ENCODE measurements at regions of chr12 and their contacts with region 1.

Region 1: GRCh38 chr12:121399391-121400331 is at the start of gene RNF34:
- DNase-seq: peak; percentile 99
- H3K4me3 Mint-ChIP-seq: peak within 1 kb of the TSS; percentile 94
- H3K27ac Mint-ChIP-seq: peak within 1 kb of the TSS; percentile 96
- H3K4me1 Mint-ChIP-seq: peaks cover 33% of the 10 kb centered on the region
- H3K27me3 Mint-ChIP-seq: no peaks in the 10 kb centered on the region
- total RNA-seq, gene RNF34: 70.4 to 72.5 TPM

Region 2: DNA sequence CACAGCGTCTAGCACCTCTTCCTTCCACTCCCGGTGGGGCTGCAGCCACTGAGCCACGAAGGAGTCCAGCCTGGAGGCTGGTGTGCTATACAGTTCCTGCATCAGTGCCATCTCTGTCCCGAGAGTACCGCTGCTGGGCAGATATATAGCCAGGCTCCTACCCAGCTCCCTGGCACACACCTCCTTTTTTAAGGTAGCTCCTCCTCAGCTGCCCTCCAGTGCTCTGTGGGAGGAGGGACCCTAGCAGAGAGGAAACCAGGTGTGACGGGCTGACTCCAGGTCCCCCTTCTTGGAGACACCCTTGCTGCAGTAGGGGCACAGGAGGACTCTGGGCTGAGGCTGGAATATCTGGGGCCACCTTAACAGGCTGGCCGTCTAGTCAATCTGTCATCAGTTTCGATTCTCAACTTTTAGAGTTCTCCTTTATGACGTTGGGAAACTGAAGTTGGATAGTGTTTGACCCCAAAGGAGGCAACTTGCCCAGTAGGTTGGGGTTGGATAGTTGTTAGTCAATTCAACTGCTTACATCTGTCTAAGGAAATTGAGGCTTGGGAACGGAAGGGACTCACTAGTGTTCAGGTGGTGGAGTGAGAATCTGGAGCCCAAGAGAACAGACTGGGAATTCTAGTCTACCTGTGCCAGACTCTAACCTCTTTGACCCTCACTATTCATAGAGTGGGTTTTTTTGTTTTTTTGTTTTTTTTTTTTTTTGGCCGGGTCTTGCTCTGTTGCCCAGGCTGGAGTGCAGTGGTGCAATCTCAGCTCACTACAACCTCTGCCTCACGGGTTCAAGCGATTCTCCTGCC is 360.6 kb before region 1 on chr12 and contains the start of gene OASL:
- CTCF ChIA-PET with region 1: no interaction called
- POLR2A ChIA-PET with region 1: no interaction called
- intact Hi-C with region 1: loop called (anchors 1 kb)
- DNase-seq: peak; percentile 75
- H3K4me3 Mint-ChIP-seq: peak within 1 kb of the TSS; percentile 85
- H3K27ac Mint-ChIP-seq: peak within 1 kb of the TSS; percentile 84
- H3K4me1 Mint-ChIP-seq: peaks cover 50% of the 10 kb centered on the region
- H3K27me3 Mint-ChIP-seq: peaks cover 9% of the 10 kb centered on the region
- total RNA-seq, gene OASL: 21.9 to 26.5 TPM

Region 3: DNA sequence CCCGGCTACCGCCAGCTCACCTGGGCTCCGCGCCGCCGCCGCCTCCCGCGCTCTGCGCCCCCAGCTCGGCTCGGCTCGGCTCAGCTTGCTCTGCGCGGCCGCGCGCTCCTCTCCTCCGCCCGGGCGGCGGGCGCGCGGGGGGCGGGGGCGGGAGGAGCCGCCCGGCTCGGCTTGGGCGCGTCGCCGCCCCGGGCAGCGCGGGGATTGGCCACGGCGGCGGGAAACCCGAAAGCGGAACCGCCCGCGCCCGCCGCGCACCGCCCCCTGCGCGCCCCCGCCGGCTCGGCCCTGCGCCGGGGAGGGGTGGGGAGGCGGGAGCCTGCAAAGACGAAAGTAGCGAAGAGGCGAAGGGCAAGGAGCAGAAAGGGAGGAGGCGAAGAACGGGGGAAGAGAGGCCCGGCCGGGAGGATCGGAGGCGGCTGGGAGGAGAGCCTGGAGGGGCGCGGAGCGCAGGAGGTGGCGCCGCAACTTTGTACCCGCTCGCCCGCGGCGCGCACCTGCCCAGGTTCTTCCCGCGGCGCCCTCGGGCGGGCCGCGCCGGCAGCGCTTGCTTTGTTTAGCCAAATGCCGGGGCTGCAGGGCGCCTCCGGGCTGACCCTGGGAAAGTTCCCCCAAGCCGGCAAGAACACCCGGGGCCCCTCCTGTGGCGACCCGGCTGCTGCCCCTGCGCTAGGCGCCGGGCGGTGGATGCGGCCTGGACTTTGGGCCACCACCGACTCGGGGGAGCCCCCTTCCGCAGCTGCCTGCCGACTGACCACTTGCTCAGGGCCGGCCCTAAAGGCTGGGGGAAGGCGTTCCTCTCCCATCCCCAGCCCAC is 102.8 kb before region 1 on chr12 and contains the start of gene CAMKK2:
- CTCF ChIA-PET with region 1: interaction called, 4 read pairs
- POLR2A ChIA-PET with region 1: interaction called, 16 read pairs
- intact Hi-C with region 1: loop called (anchors 2 kb)
- DNase-seq: peak; percentile 90
- H3K4me3 Mint-ChIP-seq: peak within 1 kb of the TSS; percentile 89
- H3K27ac Mint-ChIP-seq: peak within 1 kb of the TSS; percentile 65
- H3K4me1 Mint-ChIP-seq: peaks cover 18% of the 10 kb centered on the region
- H3K27me3 Mint-ChIP-seq: no peaks in the 10 kb centered on the region
- total RNA-seq, gene CAMKK2: 22.0 to 22.4 TPM

Region 4: GRCh38 chr12:121351820-121352681 is 47.6 kb before region 1 on chr12 and contains the start of gene ANAPC5:
- CTCF ChIA-PET with region 1: interaction called, 8 read pairs
- POLR2A ChIA-PET with region 1: interaction called, 43 read pairs
- intact Hi-C with region 1: loop called (anchors 1 kb)
- DNase-seq: peak; percentile 96
- H3K4me3 Mint-ChIP-seq: peak within 1 kb of the TSS; percentile 90
- H3K27ac Mint-ChIP-seq: peak within 1 kb of the TSS; percentile 86
- H3K4me1 Mint-ChIP-seq: peaks cover 24% of the 10 kb centered on the region
- H3K27me3 Mint-ChIP-seq: no peaks in the 10 kb centered on the region
- total RNA-seq, gene ANAPC5: 112 to 120 TPM

Region 5: DNA sequence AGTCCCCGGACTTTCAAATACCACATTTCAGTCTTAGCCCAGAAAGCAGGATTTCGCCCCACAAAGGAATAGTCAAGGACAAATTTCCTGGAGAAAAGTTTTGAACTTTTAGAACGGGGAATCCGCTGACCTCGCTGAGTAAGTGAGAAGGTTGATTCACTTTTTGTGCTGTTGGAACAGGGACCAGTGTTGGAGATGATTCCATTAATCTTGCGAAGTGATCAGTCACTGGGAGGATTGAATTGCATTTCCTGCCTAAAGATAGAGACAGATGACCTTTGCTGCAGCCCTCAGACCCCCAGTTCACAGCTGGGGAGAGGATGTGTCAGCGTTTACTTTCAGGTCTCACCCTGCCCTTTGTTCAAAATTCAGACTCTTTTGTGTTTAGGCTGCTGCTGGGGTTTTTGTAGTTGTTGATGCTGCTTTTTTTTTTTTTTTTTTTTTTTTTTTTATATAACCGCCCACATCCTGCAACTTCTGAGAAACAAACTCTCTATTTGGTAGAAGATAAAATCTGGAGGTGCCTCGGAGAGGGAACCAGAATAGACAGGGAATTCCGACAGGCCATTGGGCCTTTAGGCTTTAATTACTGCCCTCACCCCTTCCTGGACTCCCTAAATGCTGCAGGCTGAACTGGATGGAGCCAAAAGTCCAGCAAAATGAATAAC is 190.9 kb after region 1 on chr12:
- CTCF ChIA-PET with region 1: no interaction called
- POLR2A ChIA-PET with region 1: no interaction called
- intact Hi-C with region 1: loop called (anchors 5 kb)
- DNase-seq: peak; percentile 80
- H3K4me3 Mint-ChIP-seq: peak overlapping the region; percentile 82
- H3K27ac Mint-ChIP-seq: peak overlapping the region; percentile 98
- H3K4me1 Mint-ChIP-seq: peaks cover 26% of the 10 kb centered on the region
- H3K27me3 Mint-ChIP-seq: no peaks in the 10 kb centered on the region